ENCODE measurements at regions of chr7 and their contacts with region 1.

Region 1: DNA sequence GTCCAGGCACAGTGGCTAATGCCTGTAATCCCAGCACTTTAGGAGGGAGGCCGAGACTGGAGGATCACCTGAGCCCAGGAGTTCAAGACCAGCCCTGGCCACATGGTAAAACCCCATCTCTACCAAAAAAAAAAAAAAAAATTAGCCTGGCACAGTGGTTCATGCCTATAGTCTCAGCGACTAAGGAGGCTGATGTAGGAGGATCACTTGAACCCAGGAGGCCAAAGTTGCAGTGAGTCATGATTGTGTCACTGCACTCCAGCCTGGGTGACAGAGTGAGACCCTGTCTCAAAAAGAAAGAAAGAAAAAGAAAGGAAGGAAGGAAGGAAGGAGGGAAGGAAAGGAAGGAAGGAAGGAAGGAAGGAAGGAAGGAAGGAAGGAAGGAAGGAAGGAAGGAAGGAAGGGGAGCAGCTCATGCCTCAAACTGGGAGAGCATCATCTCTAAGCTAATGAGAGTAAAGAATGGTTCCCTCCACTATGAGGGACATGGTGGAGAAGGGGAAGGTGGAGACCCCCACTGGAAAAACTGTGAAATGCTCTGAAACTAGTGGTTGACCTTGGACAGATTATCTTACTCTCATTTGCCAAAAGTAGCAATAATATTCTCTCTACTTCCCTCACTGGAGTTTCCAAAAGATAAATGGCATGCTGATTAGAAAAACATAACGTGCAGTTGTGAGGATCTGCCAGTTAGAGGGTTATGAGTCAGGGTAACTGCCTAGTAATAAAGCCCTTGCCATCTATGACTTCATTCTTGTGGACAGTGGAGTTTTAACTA is 16.8 kb downstream of the GIMAP5 start:
- DNase-seq: peak; percentile 76
- H3K4me3 Mint-ChIP-seq: peak overlapping the region; percentile 64
- H3K27ac Mint-ChIP-seq: peak overlapping the region; percentile 95
- H3K4me1 Mint-ChIP-seq: peaks cover 58% of the 10 kb centered on the region
- H3K27me3 Mint-ChIP-seq: peaks cover 2% of the 10 kb centered on the region

Region 2: GRCh38 chr7:149707448-149707886 is 1046.5 kb before region 1 on chr7:
- intact Hi-C with region 1: no loop called
- DNase-seq: no peak
- H3K4me3 Mint-ChIP-seq: no peak overlapping the region
- H3K27ac Mint-ChIP-seq: no peak overlapping the region
- H3K4me1 Mint-ChIP-seq: no peaks in the 10 kb centered on the region
- H3K27me3 Mint-ChIP-seq: peaks cover 5% of the 10 kb centered on the region

Region 3: DNA sequence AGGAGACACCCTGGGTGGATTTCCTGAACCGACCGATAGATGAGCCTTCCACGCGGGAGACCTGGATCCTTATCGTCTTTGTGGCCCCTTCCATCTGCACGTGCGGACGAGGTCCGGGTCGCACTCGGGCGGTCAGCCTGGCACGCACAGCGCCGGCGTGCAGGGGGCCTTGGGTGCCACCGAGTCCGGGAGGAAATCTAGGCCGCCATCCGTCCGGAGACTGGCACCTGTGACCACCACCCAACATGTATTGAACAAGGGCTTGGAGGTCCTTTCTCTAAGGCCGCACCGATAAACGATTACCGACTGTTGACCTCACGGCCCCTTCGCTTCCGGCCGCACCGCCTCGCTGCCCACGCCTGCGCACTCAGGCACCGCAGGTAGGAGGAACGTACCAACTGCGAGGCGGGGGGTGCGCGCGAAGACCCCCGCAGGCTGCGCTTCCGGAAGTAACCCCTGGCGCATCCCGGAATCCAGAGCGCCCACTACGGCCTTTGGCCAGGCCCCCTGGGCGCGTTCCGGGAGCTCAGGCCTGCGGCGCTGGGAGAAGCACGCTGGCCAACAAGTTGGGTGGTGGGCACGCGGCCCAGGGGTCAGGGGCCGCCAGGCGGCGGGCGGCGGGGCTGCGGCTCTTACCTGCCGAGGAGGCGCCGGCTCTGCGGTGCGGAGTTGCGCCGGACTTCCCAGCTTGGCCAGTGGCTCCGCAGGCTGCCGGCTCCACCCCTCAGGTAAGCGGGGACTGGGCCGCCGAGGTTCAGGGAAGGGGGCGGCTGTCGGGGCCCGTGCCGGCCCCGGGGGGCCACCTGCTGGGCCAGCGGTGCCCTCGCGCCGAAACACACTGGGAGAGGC is 431.0 kb before region 1 on chr7 and contains the starts of genes ACTR3C and LRRC61:
- intact Hi-C with region 1: loop called (anchors 1 kb)
- DNase-seq: peak; percentile 91
- H3K4me3 Mint-ChIP-seq: peak within 1 kb of the TSS; percentile 99
- H3K27ac Mint-ChIP-seq: peak within 1 kb of the TSS; percentile 100
- H3K4me1 Mint-ChIP-seq: peaks cover 49% of the 10 kb centered on the region
- H3K27me3 Mint-ChIP-seq: no peaks in the 10 kb centered on the region
- total RNA-seq, gene ACTR3C: 7.9 and 11.7 TPM in 2 replicates
- total RNA-seq, gene LRRC61: 26.8 and 27.5 TPM in 2 replicates

Region 4: GRCh38 chr7:150404805-150405583 is 349.0 kb before region 1 on chr7:
- intact Hi-C with region 1: loop called (anchors 1 kb)
- DNase-seq: peak; percentile 95
- H3K4me3 Mint-ChIP-seq: peak overlapping the region; percentile 87
- H3K27ac Mint-ChIP-seq: peak overlapping the region; percentile 89
- H3K4me1 Mint-ChIP-seq: peaks cover 34% of the 10 kb centered on the region
- H3K27me3 Mint-ChIP-seq: no peaks in the 10 kb centered on the region

Region 5: DNA sequence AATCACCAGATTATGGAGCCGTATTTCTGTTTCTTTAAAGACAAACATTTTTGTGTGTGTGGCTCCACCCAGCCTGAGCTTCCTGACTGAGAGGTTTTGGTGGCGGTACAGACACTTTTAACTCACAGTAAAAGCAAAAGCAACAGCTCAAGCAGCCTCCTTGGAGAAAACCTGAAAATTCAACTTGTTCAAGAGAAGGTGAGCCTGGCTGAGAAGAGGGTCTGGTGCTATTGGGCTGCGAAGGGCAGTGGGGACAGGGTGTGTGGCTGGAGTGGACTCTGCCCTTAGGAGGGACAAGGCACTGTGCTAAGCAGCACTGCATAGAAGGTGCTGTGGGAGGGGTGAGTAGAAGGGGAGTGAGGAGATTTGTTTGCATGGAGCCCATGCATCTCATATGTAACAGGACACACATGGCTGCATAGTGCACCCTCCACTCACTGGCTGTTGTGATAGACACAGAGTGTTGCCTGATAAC is 239.2 kb before region 1 on chr7 and contains the start of gene GIMAP7:
- intact Hi-C with region 1: loop called (anchors 1 kb)
- DNase-seq: peak; percentile 93
- H3K4me3 Mint-ChIP-seq: peak within 1 kb of the TSS; percentile 99
- H3K27ac Mint-ChIP-seq: peak within 1 kb of the TSS; percentile 99
- H3K4me1 Mint-ChIP-seq: peaks cover 54% of the 10 kb centered on the region
- H3K27me3 Mint-ChIP-seq: no peaks in the 10 kb centered on the region
- total RNA-seq, gene GIMAP7: 40.5 and 45.0 TPM in 2 replicates

Region 6: DNA sequence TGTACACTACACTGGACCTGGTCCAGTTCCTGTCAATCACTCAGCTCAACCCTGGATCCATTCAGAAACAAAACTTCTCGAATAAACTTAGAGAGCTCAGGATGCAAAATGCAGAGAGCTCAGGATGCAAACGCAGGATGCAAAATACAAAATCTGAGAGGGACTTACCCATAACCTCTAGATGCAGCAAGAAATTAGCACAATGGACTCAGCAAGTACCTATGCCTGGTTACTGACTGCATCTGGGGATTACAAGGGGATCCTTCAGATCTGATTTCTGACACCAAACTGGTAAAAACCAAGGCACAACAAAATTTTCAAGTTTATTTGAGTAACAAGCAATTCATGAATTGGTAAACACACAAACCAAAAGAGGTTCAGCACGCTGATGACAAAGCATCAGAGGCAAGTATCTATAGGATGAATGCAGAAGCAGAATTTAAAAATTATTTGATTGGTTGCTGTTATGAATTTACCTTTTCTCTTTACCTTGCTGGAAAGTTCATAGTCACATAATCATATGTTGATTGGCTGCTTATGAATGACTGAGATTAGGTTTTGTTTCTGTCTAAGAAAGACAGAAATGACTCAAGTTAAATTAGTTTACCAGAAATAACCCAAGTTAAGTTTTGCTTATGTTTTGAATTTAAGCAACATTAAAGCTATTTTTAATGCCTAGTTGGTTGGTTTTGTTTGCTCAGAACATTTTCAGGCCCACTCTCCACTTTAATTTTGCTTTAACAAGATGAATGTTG is 133.2 kb before region 1 on chr7:
- intact Hi-C with region 1: loop called (anchors 1 kb)
- DNase-seq: peak; percentile 67
- H3K4me3 Mint-ChIP-seq: peak overlapping the region; percentile 63
- H3K27ac Mint-ChIP-seq: peak overlapping the region; percentile 85
- H3K4me1 Mint-ChIP-seq: peaks cover 51% of the 10 kb centered on the region
- H3K27me3 Mint-ChIP-seq: no peaks in the 10 kb centered on the region

Region 7: GRCh38 chr7:150685219-150686029 is 68.6 kb before region 1 on chr7 and contains the start of gene GIMAP2:
- intact Hi-C with region 1: loop called (anchors 2 kb)
- DNase-seq: peak; percentile 83
- H3K4me3 Mint-ChIP-seq: peak within 1 kb of the TSS; percentile 98
- H3K27ac Mint-ChIP-seq: peak within 1 kb of the TSS; percentile 99
- H3K4me1 Mint-ChIP-seq: peaks cover 65% of the 10 kb centered on the region
- H3K27me3 Mint-ChIP-seq: no peaks in the 10 kb centered on the region
- total RNA-seq, gene GIMAP2: 28.2 TPM in 2 replicates

Region 8: GRCh38 chr7:150955519-150956394 is 201.7 kb after region 1 on chr7:
- intact Hi-C with region 1: no loop called
- DNase-seq: no peak
- H3K4me3 Mint-ChIP-seq: no peak overlapping the region
- H3K27ac Mint-ChIP-seq: no peak overlapping the region
- H3K4me1 Mint-ChIP-seq: peaks cover 3% of the 10 kb centered on the region
- H3K27me3 Mint-ChIP-seq: peaks cover 33% of the 10 kb centered on the region

Region 9: GRCh38 chr7:151341357-151342101 is 587.5 kb after region 1 on chr7 and contains the start of gene NUB1:
- intact Hi-C with region 1: loop called (anchors 10 kb)
- DNase-seq: peak; percentile 98
- H3K4me3 Mint-ChIP-seq: peak within 1 kb of the TSS; percentile 85
- H3K27ac Mint-ChIP-seq: peak within 1 kb of the TSS; percentile 87
- H3K4me1 Mint-ChIP-seq: peaks cover 22% of the 10 kb centered on the region
- H3K27me3 Mint-ChIP-seq: no peaks in the 10 kb centered on the region
- total RNA-seq, gene NUB1: 36.5 and 40.4 TPM in 2 replicates

Measured in activated CD4-positive, alpha-beta T cell treated with anti-CD3 and anti-CD28 coated beads, Interleukin-2, amount 10 ng/mL, durations not matched to agents 24 days and 14 days (primary cell).